HepG2 (cell line): ENCODE measurements at regions of chr2 and their contacts with region 1.

Region 1: GRCh38 chr2:203706403-203706802 is at the start of gene CD28:
- DNase-seq: no peak
- ATAC-seq: no peak
- H3K4me3 ChIP-seq: no peak within 1 kb of the TSS
- H3K27ac ChIP-seq: no peak within 1 kb of the TSS
- H3K4me1 ChIP-seq: peaks cover 43% of the 10 kb centered on the region
- H3K27me3 ChIP-seq: no peaks in the 10 kb centered on the region
- CTCF ChIP-seq: no peak
- EP300 ChIP-seq: no peak
- POLR2A ChIP-seq: no peak
- RAD21 ChIP-seq: no peak
- total RNA-seq, gene CD28: not detected in 2 replicates

Region 2: GRCh38 chr2:203470371-203470770 is 236.0 kb before region 1 on chr2:
- CTCF ChIA-PET with region 1: no interaction called
- POLR2A ChIA-PET with region 1: no interaction called
- in situ Hi-C with region 1: no loop called
- intact Hi-C with region 1: loop called (anchors 1 kb)
- DNase-seq: no peak
- ATAC-seq: no peak
- H3K4me3 ChIP-seq: no peak overlapping the region
- H3K27ac ChIP-seq: no peak overlapping the region
- H3K4me1 ChIP-seq: no peaks in the 10 kb centered on the region
- H3K27me3 ChIP-seq: no peaks in the 10 kb centered on the region
- CTCF ChIP-seq: no peak
- EP300 ChIP-seq: no peak
- POLR2A ChIP-seq: no peak
- RAD21 ChIP-seq: no peak

Region 3: DNA sequence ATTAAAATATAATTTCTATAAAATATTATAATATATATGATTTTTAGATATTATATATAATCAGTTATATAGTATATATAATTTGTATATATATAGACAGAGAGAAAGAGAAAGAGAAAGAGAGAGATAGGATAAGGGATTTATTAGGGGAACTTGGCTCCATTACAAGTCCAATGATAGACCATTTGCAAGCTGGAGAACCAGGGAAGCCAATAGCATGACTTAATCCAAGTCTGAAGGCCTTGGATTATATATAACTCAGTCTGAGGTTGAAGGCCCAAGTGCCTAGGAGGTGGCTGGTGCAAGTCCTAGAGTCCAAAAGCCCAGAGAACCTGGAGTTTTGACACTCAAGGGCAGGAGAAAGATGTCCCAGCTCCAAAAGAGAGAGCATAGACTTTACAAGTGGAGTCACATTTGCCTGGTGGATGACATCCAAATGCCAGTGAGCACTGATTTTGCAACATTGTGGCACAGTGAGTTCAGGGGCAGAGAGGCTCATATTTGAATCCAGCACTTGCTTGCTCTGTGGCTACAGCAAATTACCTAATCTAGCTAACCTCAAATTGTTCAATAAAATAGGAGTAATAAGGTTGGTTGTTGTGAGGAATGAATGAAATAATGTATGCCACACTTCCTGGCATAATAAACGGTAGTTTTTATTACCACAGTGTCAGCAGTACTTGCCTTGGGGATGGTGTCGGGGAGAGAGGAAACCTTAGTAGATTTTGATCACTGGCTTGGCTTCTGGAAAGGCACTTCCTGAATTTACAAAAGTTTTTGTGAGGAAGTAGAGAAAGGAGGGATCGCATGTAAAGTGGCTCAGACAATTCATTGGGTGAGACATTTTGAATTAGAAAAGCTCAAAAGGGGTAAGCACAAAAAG is 69.6 kb before region 1 on chr2:
- CTCF ChIA-PET with region 1: no interaction called
- POLR2A ChIA-PET with region 1: no interaction called
- in situ Hi-C with region 1: no loop called
- intact Hi-C with region 1: no loop called
- DNase-seq: no peak
- ATAC-seq: no peak
- H3K4me3 ChIP-seq: no peak overlapping the region
- H3K27ac ChIP-seq: no peak overlapping the region
- H3K4me1 ChIP-seq: peaks cover 19% of the 10 kb centered on the region
- H3K27me3 ChIP-seq: no peaks in the 10 kb centered on the region
- CTCF ChIP-seq: no peak
- EP300 ChIP-seq: no peak
- POLR2A ChIP-seq: no peak
- RAD21 ChIP-seq: no peak

Region 4: DNA sequence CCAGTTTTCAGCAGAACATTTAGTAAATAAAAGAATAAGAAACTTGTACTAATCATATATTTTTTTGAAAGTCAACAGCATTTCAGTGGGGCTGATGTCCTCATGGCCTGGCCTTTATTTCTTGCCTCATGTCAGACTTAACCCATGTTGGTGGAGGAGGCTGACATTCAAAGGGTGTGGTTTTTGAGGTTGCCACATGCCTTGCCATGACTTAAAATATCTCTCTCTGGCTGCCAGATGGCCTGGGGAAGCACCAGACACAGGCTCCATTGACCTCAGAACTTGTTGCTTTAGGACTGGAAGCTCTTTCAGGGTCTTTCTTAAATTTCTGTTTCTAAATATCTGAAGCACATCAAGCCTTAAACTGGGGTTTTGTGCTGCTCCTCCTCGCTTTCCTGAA is 32.5 kb before region 1 on chr2:
- CTCF ChIA-PET with region 1: no interaction called
- POLR2A ChIA-PET with region 1: no interaction called
- in situ Hi-C with region 1: no loop called
- intact Hi-C with region 1: no loop called
- DNase-seq: no peak
- ATAC-seq: no peak
- H3K4me3 ChIP-seq: no peak overlapping the region
- H3K27ac ChIP-seq: no peak overlapping the region
- H3K4me1 ChIP-seq: no peaks in the 10 kb centered on the region
- H3K27me3 ChIP-seq: no peaks in the 10 kb centered on the region
- CTCF ChIP-seq: no peak
- EP300 ChIP-seq: no peak
- POLR2A ChIP-seq: no peak
- RAD21 ChIP-seq: no peak

Region 5: DNA sequence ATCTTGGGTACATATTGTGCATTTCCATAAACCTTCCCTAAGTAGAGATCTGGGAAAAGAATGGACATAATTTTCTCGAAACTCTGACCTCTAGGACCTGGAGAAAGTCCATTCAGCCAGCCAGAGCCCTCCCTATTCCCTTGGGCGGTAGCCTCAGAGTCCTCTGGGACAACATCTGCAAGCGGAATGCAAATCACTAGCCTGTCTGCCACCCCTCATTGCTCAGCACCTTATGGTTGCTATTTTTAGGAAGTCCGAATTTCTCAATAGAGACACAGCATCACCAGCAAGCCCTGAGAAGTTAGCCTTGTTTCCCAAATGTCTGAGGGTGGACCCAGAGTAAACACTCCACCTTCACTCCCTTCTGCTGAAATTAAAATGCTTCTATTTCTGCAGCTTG is 17.6 kb before region 1 on chr2:
- CTCF ChIA-PET with region 1: no interaction called
- POLR2A ChIA-PET with region 1: no interaction called
- in situ Hi-C with region 1: no loop called
- intact Hi-C with region 1: loop called (anchors 2 kb)
- DNase-seq: no peak
- ATAC-seq: peak; percentile 53
- H3K4me3 ChIP-seq: no peak overlapping the region
- H3K27ac ChIP-seq: no peak overlapping the region
- H3K4me1 ChIP-seq: peaks cover 63% of the 10 kb centered on the region
- H3K27me3 ChIP-seq: no peaks in the 10 kb centered on the region
- CTCF ChIP-seq: no peak
- EP300 ChIP-seq: no peak
- POLR2A ChIP-seq: no peak
- RAD21 ChIP-seq: no peak

Region 6: GRCh38 chr2:203740780-203741281 is 34.4 kb after region 1 on chr2:
- CTCF ChIA-PET with region 1: no interaction called
- POLR2A ChIA-PET with region 1: no interaction called
- in situ Hi-C with region 1: no loop called
- intact Hi-C with region 1: no loop called
- DNase-seq: no peak
- ATAC-seq: no peak
- H3K4me3 ChIP-seq: no peak overlapping the region
- H3K27ac ChIP-seq: no peak overlapping the region
- H3K4me1 ChIP-seq: peaks cover 20% of the 10 kb centered on the region
- H3K27me3 ChIP-seq: no peaks in the 10 kb centered on the region; a peak in 1 of 5 replicates
- CTCF ChIP-seq: no peak
- EP300 ChIP-seq: no peak
- POLR2A ChIP-seq: no peak
- RAD21 ChIP-seq: no peak